ENCODE measurements at regions of chr17 and their contacts with region 1.

Region 1: GRCh38 chr17:78019367-78019975 is 61.0 kb downstream of the TNRC6C start:
- DNase-seq: peak; percentile 9
- ATAC-seq: peak; percentile 63
- H3K4me3 ChIP-seq: peak overlapping the region; percentile 25; the same call in 1 of the 2 replicates
- H3K27ac ChIP-seq: peak overlapping the region; percentile 60; the same call in 1 of the 2 replicates
- H3K4me1 ChIP-seq: peaks cover 14% of the 10 kb centered on the region
- H3K27me3 ChIP-seq: no peaks in the 10 kb centered on the region
- CTCF ChIP-seq: peak; percentile 31 to 67 (median 51); a peak in 5 of 6 replicates
- EP300 ChIP-seq: no peak
- POLR2A ChIP-seq: no peak
- RAD21 ChIP-seq: peak; percentile 62

Region 2: GRCh38 chr17:77881545-77881944 is 137.9 kb before region 1 on chr17:
- CTCF ChIA-PET with region 1: interaction called, 10 read pairs
- POLR2A ChIA-PET with region 1: no interaction called
- RAD21 ChIA-PET with region 1: interaction called, 10 read pairs
- SMC1A ChIA-PET with region 1: interaction called, 6 read pairs
- in situ Hi-C with region 1: no loop called
- intact Hi-C with region 1: no loop called
- DNase-seq: peak; percentile 89
- ATAC-seq: peak; percentile 96
- H3K4me3 ChIP-seq: peak overlapping the region; percentile 4; the same call in 1 of the 2 replicates
- H3K27ac ChIP-seq: no peak overlapping the region; the same call in 1 of the 2 replicates
- H3K4me1 ChIP-seq: peaks cover 21% of the 10 kb centered on the region
- H3K27me3 ChIP-seq: no peaks in the 10 kb centered on the region; a peak in 2 of 4 replicates
- CTCF ChIP-seq: no peak
- EP300 ChIP-seq: peak; percentile 70 to 90; a peak in 3 of 4 replicates
- POLR2A ChIP-seq: no peak
- RAD21 ChIP-seq: peak; percentile 29; the same call in 1 of the 2 replicates

Region 3: DNA sequence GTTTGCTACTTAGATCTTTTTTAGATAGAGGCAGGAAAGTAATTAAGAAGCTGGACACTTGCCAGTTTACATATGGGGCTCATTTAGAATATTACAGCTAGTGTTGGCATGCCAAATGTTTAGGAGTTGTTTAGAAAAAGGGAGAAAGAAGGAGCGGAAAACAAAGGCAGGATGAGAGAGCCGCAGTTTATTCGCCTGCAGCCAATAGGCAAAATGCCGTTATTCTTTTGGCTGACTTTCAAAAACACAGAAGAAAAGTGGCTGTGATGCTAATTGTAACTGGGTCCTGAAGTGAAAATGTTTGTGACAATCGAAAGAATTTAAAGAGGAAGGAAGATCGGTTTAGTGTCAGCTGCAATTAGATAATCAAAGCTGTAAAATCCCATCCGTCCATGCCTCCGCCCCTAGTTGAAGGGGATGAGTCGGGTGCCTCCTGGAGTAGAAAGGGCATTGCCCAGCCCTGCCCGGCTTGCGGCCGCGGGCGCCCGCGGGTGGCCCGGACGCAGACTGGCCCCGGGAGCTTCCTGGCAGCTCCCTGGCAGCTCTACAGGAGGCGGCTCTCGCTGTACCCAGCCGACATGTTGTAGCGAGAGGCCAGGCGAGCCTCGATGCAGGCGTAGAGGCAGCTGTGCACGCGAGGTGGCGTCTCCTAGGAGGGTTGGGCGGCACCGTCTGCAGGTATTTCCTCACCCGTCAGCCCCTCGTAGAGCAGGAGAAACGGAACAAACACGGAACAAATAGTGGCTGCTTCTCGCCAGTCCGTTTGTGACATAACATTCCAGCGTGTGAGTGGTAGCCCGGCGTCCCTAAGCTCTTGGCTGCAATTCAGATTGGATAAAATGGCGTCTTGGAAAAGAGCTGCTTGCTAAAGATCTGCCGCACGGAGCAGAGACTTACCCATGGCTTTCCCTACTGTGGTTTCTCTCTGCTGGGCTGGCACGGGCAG is 21.2 kb after region 1 on chr17:
- CTCF ChIA-PET with region 1: interaction called, 80 read pairs
- POLR2A ChIA-PET with region 1: interaction called, 14 read pairs
- RAD21 ChIA-PET with region 1: interaction called, 61 read pairs
- SMC1A ChIA-PET with region 1: interaction called, 79 read pairs
- in situ Hi-C with region 1: no loop called
- intact Hi-C with region 1: no loop called
- DNase-seq: peak; percentile 21
- ATAC-seq: peak; percentile 99
- H3K4me3 ChIP-seq: peak overlapping the region; percentile 57; the same call in 1 of the 2 replicates
- H3K27ac ChIP-seq: peak overlapping the region; percentile 34; the same call in 1 of the 2 replicates
- H3K4me1 ChIP-seq: no peaks in the 10 kb centered on the region
- H3K27me3 ChIP-seq: no peaks in the 10 kb centered on the region
- CTCF ChIP-seq: peak in 1 of 3 experiments; percentile 25; a peak in 2 of 6 replicates
- EP300 ChIP-seq: no peak
- POLR2A ChIP-seq: no peak
- RAD21 ChIP-seq: no peak

Region 4: GRCh38 chr17:78082988-78083387 is 63.5 kb after region 1 on chr17:
- CTCF ChIA-PET with region 1: interaction called, 100 read pairs
- POLR2A ChIA-PET with region 1: interaction called, 4 read pairs
- RAD21 ChIA-PET with region 1: interaction called, 79 read pairs
- SMC1A ChIA-PET with region 1: interaction called, 94 read pairs
- in situ Hi-C with region 1: no loop called
- intact Hi-C with region 1: loop called (anchors 5 kb)
- DNase-seq: no peak
- ATAC-seq: no peak
- H3K4me3 ChIP-seq: no peak overlapping the region
- H3K27ac ChIP-seq: no peak overlapping the region
- H3K4me1 ChIP-seq: no peaks in the 10 kb centered on the region
- H3K27me3 ChIP-seq: no peaks in the 10 kb centered on the region
- CTCF ChIP-seq: no peak
- EP300 ChIP-seq: no peak
- POLR2A ChIP-seq: no peak
- RAD21 ChIP-seq: no peak

Region 5: GRCh38 chr17:78133971-78134898 is 114.8 kb after region 1 on chr17:
- CTCF ChIA-PET with region 1: interaction called, 15 read pairs
- POLR2A ChIA-PET with region 1: interaction called, 3 read pairs
- RAD21 ChIA-PET with region 1: interaction called, 5 read pairs
- SMC1A ChIA-PET with region 1: interaction called, 4 read pairs
- in situ Hi-C with region 1: no loop called
- intact Hi-C with region 1: no loop called
- DNase-seq: no peak
- ATAC-seq: peak; percentile 34
- H3K4me3 ChIP-seq: peak overlapping the region; percentile 94
- H3K27ac ChIP-seq: peak overlapping the region; percentile 93
- H3K4me1 ChIP-seq: peaks cover 64% of the 10 kb centered on the region
- H3K27me3 ChIP-seq: no peaks in the 10 kb centered on the region
- CTCF ChIP-seq: peak; percentile 76 to 78 (median 76)
- EP300 ChIP-seq: peak in 1 of 2 experiments; percentile 58; a peak in 1 of 4 replicates
- POLR2A ChIP-seq: peak; percentile 76
- RAD21 ChIP-seq: peak; percentile 75

Region 6: GRCh38 chr17:78289802-78290363 is 270.4 kb after region 1 on chr17:
- CTCF ChIA-PET with region 1: interaction called, 15 read pairs
- POLR2A ChIA-PET with region 1: no interaction called
- RAD21 ChIA-PET with region 1: interaction called, 11 read pairs
- SMC1A ChIA-PET with region 1: no interaction called
- in situ Hi-C with region 1: no loop called
- intact Hi-C with region 1: no loop called
- DNase-seq: peak; percentile 30
- ATAC-seq: peak; percentile 100
- H3K4me3 ChIP-seq: no peak overlapping the region
- H3K27ac ChIP-seq: no peak overlapping the region
- H3K4me1 ChIP-seq: peaks cover 8% of the 10 kb centered on the region
- H3K27me3 ChIP-seq: no peaks in the 10 kb centered on the region
- CTCF ChIP-seq: peak; percentile 88 to 92 (median 89)
- EP300 ChIP-seq: no peak
- POLR2A ChIP-seq: no peak
- RAD21 ChIP-seq: peak; percentile 91

Measured in GM12878 (cell line).